Aorta (tissue), 5 donors: ENCODE measurements at regions of chr12 and their contacts with region 1.

Region 1: DNA sequence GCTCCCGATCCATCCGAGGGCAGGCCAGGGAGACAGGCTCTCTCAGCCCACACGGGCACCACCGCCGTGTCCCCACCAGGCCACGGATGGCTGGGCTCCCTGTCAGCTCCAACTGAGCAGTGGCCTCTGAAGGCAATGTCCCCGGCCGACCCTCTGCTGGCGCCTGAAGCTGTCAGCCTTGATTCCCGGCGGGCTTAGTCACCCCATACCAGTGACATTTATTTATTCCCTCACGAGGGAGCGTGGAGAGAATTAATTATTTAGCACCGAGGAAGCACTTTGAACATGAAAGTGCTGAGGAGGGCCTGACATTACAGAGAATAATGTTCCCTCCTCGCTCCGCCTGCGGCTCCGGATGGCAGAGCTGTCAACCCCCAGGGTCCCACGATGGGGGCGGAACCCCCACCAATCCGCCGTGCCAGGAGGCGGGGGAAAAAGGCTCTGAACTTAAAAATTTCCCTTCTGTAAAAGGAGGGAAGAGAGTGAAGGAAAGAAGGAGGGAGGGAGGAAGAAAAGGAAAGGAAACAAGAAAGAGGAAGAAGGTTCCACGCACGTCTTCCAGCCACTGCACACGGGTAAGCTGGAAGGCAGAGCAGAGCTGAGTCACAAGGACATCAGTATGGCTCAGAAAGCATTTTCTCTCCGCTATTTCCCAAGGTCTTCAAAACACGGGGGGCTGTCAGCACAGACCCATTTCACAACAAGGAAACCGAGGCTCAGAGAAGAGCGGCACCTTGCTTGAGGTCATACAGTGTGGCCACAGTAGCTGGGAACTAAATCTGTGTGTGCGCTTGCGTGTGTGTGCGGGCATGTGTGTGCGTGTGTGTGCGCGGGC is 108.7 kb upstream of the NCOR2 start:
- DNase-seq: peak; percentile 81 to 91
- ATAC-seq: peak; percentile 56
- H3K4me3 ChIP-seq: peak overlapping the region in 1 of 2 donors; percentile 14
- H3K27ac ChIP-seq: peak overlapping the region in 1 of 2 donors; percentile 41
- H3K4me1 ChIP-seq: no peaks in the 10 kb centered on the region
- H3K27me3 ChIP-seq: no peaks in the 10 kb centered on the region

Region 2: DNA sequence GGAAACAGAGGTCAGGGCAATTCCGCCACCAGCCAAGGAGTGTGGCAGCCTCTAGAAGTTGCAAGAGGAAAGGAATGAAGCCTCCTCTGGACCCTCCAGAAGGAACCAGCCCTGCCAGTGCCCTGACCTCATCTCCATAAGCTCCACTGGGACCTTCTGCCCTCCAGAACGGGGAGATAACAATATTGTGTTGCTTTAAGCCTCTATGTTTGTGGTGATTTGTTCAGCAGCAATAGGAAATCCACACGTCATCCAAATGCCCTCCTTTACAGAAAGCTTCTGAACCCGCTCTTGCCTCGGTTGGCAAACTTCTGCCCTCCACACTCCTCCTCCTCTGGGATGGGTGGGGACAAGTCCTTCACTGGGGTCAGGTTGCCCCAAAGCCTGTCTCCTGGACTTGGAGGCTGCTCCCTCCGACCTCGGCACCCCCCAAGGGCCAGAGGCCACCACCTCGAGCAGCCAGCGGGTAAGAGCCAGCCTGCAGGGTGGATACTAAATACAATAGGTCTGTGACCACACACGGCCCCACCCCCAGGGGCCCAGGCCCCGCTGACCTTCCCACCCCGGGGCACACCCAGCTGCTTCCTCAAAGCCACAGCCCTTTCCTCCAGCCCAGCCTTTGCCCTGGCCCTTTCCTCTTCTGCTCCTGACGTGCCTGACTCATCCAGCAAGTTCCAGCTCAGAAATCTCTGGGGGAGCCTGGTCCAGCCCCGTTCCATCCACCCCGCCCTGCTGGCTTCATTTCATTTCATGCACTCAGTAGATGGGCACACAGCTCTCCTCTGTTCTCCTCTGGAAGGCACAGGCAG is 50.0 kb before region 1 on chr12:
- intact Hi-C with region 1: loop called in 1 of 2 experiments (anchors 5 kb)
- DNase-seq: peak; percentile 94 to 95
- ATAC-seq: peak; percentile 90
- H3K4me3 ChIP-seq: no peak overlapping the region
- H3K27ac ChIP-seq: no peak overlapping the region
- H3K4me1 ChIP-seq: no peaks in the 10 kb centered on the region
- H3K27me3 ChIP-seq: no peaks in the 10 kb centered on the region